OCI-LY7 (cell line): ENCODE measurements at regions of chr6 and their contacts with region 1.

Region 1: GRCh38 chr6:90296346-90297114 is at the start of gene BACH2:
- DNase-seq: peak; percentile 98
- H3K4me3 ChIP-seq: peak within 1 kb of the TSS; percentile 92
- H3K27ac ChIP-seq: peak within 1 kb of the TSS; percentile 82
- H3K4me1 ChIP-seq: peaks cover 64% of the 10 kb centered on the region
- CTCF ChIP-seq: no peak
- total RNA-seq, gene BACH2: 92.0 and 95.7 TPM in 2 replicates

Region 2: GRCh38 chr6:89352278-89353117 is 944.0 kb before region 1 on chr6 and contains the start of gene UBE2J1:
- CTCF ChIA-PET with region 1: no interaction called
- POLR2A ChIA-PET with region 1: interaction called, 3 read pairs
- intact Hi-C with region 1: loop called (anchors 5 kb)
- DNase-seq: peak; percentile 86
- H3K4me3 ChIP-seq: peak within 1 kb of the TSS; percentile 78
- H3K27ac ChIP-seq: peak within 1 kb of the TSS; percentile 99
- H3K4me1 ChIP-seq: peaks cover 69% of the 10 kb centered on the region
- CTCF ChIP-seq: no peak
- total RNA-seq, gene UBE2J1: 117 and 123 TPM in 2 replicates

Region 3: GRCh38 chr6:89385156-89385667 is 911.3 kb before region 1 on chr6:
- CTCF ChIA-PET with region 1: no interaction called
- POLR2A ChIA-PET with region 1: no interaction called
- intact Hi-C with region 1: no loop called
- DNase-seq: no peak
- H3K4me3 ChIP-seq: peak overlapping the region; percentile 18
- H3K27ac ChIP-seq: peak overlapping the region; percentile 23
- H3K4me1 ChIP-seq: peaks cover 60% of the 10 kb centered on the region
- CTCF ChIP-seq: no peak

Region 4: GRCh38 chr6:89829591-89830385 is 466.7 kb before region 1 on chr6 and contains the start of gene CASP8AP2:
- CTCF ChIA-PET with region 1: no interaction called
- POLR2A ChIA-PET with region 1: interaction called, 4 read pairs
- intact Hi-C with region 1: loop called (anchors 5 kb)
- DNase-seq: peak; percentile 99
- H3K4me3 ChIP-seq: peak within 1 kb of the TSS; percentile 86
- H3K27ac ChIP-seq: peak within 1 kb of the TSS; percentile 79
- H3K4me1 ChIP-seq: peaks cover 13% of the 10 kb centered on the region
- CTCF ChIP-seq: no peak
- total RNA-seq, gene CASP8AP2: 22.6 and 23.7 TPM in 2 replicates

Region 5: DNA sequence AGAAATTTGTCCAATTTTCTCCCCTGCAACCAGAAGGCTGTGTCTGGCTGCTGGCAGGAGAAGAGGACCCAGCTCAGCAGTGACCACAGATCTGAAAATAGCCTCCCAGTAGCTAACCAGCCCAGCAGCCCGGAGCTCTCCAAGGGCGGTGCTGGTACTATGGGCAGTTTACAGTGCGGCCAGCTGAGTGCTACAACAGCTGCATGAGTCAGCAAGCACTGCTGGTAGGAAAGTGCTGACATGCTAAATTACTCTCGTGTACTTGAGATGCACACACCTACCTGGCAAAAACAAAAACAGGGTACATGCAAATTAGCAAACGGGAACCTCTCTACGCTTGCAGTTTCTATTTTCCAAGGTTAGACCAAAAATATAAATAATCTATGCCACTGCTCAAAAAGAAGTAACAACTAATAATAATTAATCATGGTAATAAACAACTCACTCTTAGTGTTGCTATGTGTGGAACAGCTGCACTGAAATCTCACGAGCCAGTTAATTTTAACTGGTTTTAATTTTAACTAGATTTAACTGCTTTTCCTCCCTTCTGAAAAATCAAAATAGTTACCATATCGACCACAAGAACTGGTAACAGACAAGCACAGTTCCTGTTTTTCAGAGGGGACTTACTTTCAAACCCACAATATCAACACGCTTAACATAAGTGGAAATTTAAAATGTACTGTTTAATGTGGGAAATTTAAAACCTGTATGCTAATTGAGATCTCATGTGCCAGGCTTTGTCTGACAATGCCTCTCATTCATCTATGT is 10.7 kb before region 1 on chr6:
- CTCF ChIA-PET with region 1: interaction called, 4 read pairs
- POLR2A ChIA-PET with region 1: interaction called, 13 read pairs
- intact Hi-C with region 1: loop called (anchors 1 kb)
- DNase-seq: peak; percentile 73
- H3K4me3 ChIP-seq: peak overlapping the region; percentile 65
- H3K27ac ChIP-seq: peak overlapping the region; percentile 84
- H3K4me1 ChIP-seq: peaks cover 93% of the 10 kb centered on the region
- CTCF ChIP-seq: no peak

Region 6: GRCh38 chr6:90328004-90328403 is 31.5 kb after region 1 on chr6:
- CTCF ChIA-PET with region 1: no interaction called
- POLR2A ChIA-PET with region 1: no interaction called
- intact Hi-C with region 1: no loop called
- DNase-seq: no peak
- H3K4me3 ChIP-seq: no peak overlapping the region
- H3K27ac ChIP-seq: no peak overlapping the region
- H3K4me1 ChIP-seq: peaks cover 14% of the 10 kb centered on the region
- CTCF ChIP-seq: no peak

Region 7: GRCh38 chr6:90350689-90351554 is 54.4 kb after region 1 on chr6:
- CTCF ChIA-PET with region 1: no interaction called
- POLR2A ChIA-PET with region 1: interaction called, 4 read pairs
- intact Hi-C with region 1: loop called (anchors 2 kb)
- DNase-seq: peak; percentile 92
- H3K4me3 ChIP-seq: peak overlapping the region; percentile 8
- H3K27ac ChIP-seq: peak overlapping the region; percentile 68
- H3K4me1 ChIP-seq: peaks cover 43% of the 10 kb centered on the region
- CTCF ChIP-seq: no peak

Region 8: DNA sequence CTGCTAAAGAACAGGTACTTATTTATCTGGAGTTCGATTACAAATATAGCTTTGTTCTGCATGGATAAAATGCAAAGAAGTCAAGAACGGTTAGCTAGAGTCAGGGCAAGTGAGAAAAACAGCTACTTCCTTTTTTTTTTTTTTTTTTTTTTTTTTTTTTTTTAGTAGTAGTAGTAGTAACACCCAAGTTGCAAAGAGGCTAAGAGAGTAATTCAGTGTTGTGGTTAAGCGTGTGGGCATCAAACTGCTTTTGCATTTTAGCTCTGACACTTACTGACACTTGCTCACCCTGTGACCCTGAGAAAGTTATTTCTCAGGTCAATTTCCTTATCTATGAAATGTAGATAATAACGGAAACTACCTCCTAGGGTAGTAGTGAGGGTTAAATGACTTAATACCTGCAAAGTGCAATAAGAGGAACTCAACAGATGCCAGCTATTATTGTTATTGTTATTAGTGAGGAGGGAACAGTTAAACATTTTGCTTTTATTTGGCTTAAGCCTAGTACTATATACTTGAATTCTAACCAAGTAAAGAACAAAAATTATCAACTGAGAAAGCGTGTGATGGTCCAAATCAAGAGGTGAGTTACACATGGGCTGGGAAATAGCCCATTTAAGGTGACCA is 86.8 kb after region 1 on chr6:
- CTCF ChIA-PET with region 1: interaction called, 6 read pairs
- POLR2A ChIA-PET with region 1: interaction called, 71 read pairs
- intact Hi-C with region 1: loop called (anchors 1 kb)
- DNase-seq: peak; percentile 89
- H3K4me3 ChIP-seq: peak overlapping the region; percentile 59
- H3K27ac ChIP-seq: peak overlapping the region; percentile 97
- H3K4me1 ChIP-seq: peaks cover 97% of the 10 kb centered on the region
- CTCF ChIP-seq: no peak

Region 9: GRCh38 chr6:90586836-90587638 is 290.5 kb after region 1 on chr6 and contains the start of gene MAP3K7:
- CTCF ChIA-PET with region 1: no interaction called
- POLR2A ChIA-PET with region 1: no interaction called
- intact Hi-C with region 1: loop called (anchors 5 kb)
- DNase-seq: peak; percentile 96
- H3K4me3 ChIP-seq: peak within 1 kb of the TSS; percentile 99
- H3K27ac ChIP-seq: peak within 1 kb of the TSS; percentile 77
- H3K4me1 ChIP-seq: peaks cover 24% of the 10 kb centered on the region
- CTCF ChIP-seq: no peak
- total RNA-seq, gene MAP3K7: 25.6 and 29.5 TPM in 2 replicates